Psoas muscle (tissue), 8 donors: ENCODE measurements at regions of chr2 and their contacts with region 1.

Region 1: GRCh38 chr2:231124838-231125568 is at the start of gene HTR2B:
- DNase-seq: no peak
- ATAC-seq: peak in 1 of 4 donors; percentile 34
- H3K4me3 ChIP-seq: peak within 1 kb of the TSS; percentile 2
- H3K27ac ChIP-seq: no peak within 1 kb of the TSS
- H3K4me1 ChIP-seq: peaks cover 6% of the 10 kb centered on the region
- H3K27me3 ChIP-seq: no peaks in the 10 kb centered on the region
- CTCF ChIP-seq: no peak
- total RNA-seq, gene HTR2B: 0.17 to 0.54 (median 0.24) TPM in 3 of 4 donors, not detected in the other

Region 2: DNA sequence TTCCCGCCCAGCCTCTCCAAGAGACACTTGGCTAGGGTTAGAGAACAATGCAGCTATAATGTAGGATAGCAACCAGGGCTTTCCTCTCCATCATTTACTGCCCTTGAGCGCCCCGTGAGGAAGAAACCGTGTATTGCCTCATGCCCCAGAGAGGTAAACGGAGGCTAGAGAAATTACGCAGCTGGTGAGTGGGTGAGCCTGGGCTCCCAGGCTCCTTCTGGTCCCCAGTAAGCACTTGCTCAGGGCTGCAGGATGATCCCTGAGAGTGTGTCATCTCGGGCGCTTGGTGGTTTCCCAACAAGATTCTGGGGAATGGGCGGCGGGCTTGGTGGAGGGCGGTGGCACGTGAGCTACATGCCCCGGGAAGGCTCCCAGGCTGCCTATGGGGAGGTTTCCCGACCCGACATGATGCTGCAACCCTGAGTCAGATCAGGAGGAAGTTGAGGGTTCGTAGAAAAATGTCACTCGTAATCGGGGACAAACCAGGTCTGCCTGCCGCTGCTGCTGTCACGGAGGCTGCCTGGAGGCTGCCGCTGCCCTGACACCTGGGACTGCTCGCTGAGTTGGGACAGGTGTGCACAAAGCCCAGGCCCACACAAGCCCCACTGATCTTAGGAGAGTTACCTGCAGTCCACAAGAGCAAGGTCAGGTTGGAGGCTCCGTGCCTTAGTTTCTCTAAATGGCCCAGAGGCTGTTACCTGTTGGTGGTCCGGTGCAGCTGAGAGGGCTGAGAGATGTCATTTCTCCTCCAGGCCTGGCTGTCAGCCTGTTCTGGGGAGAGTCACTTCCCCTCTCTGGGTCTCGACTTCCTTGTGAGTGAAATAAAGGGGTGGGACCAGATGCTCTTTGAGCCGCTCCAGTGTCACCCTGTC is 200.3 kb before region 1 on chr2 and contains the start of gene GPR55:
- intact Hi-C with region 1: no loop called
- DNase-seq: no peak
- ATAC-seq: no peak
- H3K4me3 ChIP-seq: no peak within 1 kb of the TSS
- H3K27ac ChIP-seq: no peak within 1 kb of the TSS
- H3K4me1 ChIP-seq: no peaks in the 10 kb centered on the region
- H3K27me3 ChIP-seq: no peaks in the 10 kb centered on the region
- CTCF ChIP-seq: no peak
- total RNA-seq, gene GPR55: 0.32 TPM in 1 of 4 donors, not detected in the others

Region 3: DNA sequence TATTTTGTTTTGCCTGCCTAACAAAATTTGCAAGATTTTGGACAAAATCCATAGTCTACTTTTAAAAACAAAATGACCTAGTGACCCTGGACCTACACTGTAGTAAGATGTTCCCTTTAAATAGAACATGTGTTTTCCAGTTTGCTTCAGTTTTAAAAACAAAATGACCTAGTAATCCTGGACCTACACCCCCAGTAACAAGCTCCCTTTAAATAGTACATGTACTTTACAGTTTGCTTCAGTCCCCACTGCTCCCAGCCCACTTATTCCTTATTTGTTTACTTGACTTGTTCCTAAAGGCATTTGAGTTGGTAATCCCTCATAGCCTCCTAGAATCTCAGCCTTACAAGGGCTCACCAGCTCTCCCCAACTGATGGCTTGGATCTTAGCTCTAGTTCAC is 34.3 kb after region 1 on chr2:
- intact Hi-C with region 1: loop called in 1 of 2 experiments (anchors 5 kb)
- DNase-seq: no peak
- ATAC-seq: no peak
- H3K4me3 ChIP-seq: no peak overlapping the region
- H3K27ac ChIP-seq: no peak overlapping the region
- H3K4me1 ChIP-seq: no peaks in the 10 kb centered on the region
- H3K27me3 ChIP-seq: no peaks in the 10 kb centered on the region
- CTCF ChIP-seq: no peak

Region 4: GRCh38 chr2:231169488-231169887 is 44.5 kb after region 1 on chr2:
- intact Hi-C with region 1: no loop called
- DNase-seq: no peak
- ATAC-seq: no peak
- H3K4me3 ChIP-seq: no peak overlapping the region
- H3K27ac ChIP-seq: no peak overlapping the region
- H3K4me1 ChIP-seq: no peaks in the 10 kb centered on the region
- H3K27me3 ChIP-seq: no peaks in the 10 kb centered on the region
- CTCF ChIP-seq: no peak

Region 5: GRCh38 chr2:231386446-231386845 is 261.4 kb after region 1 on chr2:
- intact Hi-C with region 1: no loop called
- DNase-seq: no peak
- ATAC-seq: no peak
- H3K4me3 ChIP-seq: no peak overlapping the region
- H3K27ac ChIP-seq: no peak overlapping the region
- H3K4me1 ChIP-seq: no peaks in the 10 kb centered on the region
- H3K27me3 ChIP-seq: no peaks in the 10 kb centered on the region
- CTCF ChIP-seq: no peak

Region 6: GRCh38 chr2:232521959-232522622 is 1397.1 kb after region 1 on chr2:
- intact Hi-C with region 1: no loop called
- DNase-seq: peak; percentile 70 to 86
- ATAC-seq: peak; percentile 19 to 52 (median 32)
- H3K4me3 ChIP-seq: peak overlapping the region; percentile 81
- H3K27ac ChIP-seq: peak overlapping the region; percentile 41
- H3K4me1 ChIP-seq: peaks cover 33% of the 10 kb centered on the region
- H3K27me3 ChIP-seq: peaks cover 0 to 12% (median 0%) of the 10 kb centered on the region in 3 donors
- CTCF ChIP-seq: peak; percentile 95